ENCODE measurements at regions of chr4 and their contacts with region 1.

Region 1: GRCh38 chr4:74444891-74445642 is at the start of gene AREG:
- DNase-seq: peak; percentile 91 to 94 (median 92)
- H3K4me3 ChIP-seq: peak within 1 kb of the TSS; percentile 70 to 91 (median 80)
- H3K27ac ChIP-seq: peak within 1 kb of the TSS in 1 of 2 experiments; percentile 80
- H3K4me1 ChIP-seq: peaks cover 8 to 12% (median 9%) of the 10 kb centered on the region in 4 experiments
- H3K27me3 ChIP-seq: no peaks in the 10 kb centered on the region

Region 2: DNA sequence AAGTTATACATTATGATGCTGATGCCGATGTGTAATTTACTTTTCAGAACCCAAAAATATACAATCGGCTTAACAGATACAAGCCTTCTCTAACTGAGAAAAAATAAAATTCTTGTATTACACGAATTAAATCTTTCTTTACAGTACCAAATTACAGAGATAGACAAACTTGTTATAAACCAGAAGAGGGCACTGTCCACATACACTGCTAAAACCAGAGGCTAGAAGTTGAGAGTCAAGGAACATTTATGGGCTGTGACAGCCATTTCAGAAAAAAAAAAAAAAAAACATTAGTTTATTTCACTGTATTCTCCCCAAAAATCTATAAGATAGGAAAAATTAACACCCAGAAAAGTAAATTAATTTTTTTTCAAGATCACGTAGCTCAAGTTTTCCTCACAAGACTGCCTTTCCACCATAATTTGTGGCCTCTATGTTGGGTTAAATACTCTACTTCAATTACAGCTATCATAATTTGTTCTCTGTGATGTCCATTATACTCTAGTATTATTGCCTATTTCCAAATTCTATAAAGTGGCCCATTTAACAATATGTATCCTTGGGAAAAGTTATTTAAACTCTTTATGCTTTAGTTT is 68.1 kb before region 1 on chr4:
- CTCF ChIA-PET with region 1: interaction called, 35 read pairs
- POLR2A ChIA-PET with region 1: no interaction called
- DNase-seq: peak; percentile 65 to 82 (median 81)
- H3K4me3 ChIP-seq: no peak overlapping the region
- H3K27ac ChIP-seq: peak overlapping the region in 1 of 2 experiments; percentile 5
- H3K4me1 ChIP-seq: peaks cover 0 to 24% (median 6%) of the 10 kb centered on the region in 4 experiments
- H3K27me3 ChIP-seq: no peaks in the 10 kb centered on the region

Region 3: DNA sequence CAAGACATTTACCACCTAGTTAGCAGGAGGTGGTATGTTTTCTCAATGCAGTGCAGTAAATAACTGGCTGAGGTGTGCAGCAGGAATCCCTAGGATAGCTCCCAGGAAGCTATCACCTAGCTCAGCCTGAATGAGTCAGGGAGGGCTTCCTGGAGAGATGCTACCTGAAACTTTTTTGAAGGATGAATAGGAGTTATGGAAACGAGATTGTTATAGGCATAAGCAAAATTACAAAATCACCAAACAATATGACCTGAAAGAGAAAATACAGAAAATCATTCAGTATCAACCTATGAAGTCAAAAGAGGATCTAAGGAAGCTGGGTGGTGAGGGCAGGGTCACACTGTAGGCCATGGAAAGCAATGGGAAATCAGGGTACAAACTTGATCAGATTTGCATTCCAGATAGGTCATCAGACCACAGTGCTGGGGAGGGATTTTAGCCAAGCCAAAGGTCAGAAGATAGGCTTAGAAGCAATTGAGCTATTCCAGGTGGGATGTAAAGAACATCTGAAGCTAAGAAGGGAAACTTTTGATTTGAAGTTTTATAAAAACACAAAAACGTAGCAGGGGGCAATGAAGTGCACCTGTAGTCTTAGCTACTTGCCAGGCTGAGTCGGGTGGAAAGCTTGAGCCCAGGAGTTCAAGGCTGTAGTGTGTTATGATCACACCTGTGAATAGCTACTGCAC is 11.1 kb after region 1 on chr4:
- CTCF ChIA-PET with region 1: interaction called, 11 read pairs
- POLR2A ChIA-PET with region 1: interaction called, 3 read pairs
- DNase-seq: no peak
- H3K4me3 ChIP-seq: no peak overlapping the region
- H3K27ac ChIP-seq: no peak overlapping the region
- H3K4me1 ChIP-seq: peaks cover 0 to 3% (median 1%) of the 10 kb centered on the region in 4 experiments
- H3K27me3 ChIP-seq: no peaks in the 10 kb centered on the region

Region 4: DNA sequence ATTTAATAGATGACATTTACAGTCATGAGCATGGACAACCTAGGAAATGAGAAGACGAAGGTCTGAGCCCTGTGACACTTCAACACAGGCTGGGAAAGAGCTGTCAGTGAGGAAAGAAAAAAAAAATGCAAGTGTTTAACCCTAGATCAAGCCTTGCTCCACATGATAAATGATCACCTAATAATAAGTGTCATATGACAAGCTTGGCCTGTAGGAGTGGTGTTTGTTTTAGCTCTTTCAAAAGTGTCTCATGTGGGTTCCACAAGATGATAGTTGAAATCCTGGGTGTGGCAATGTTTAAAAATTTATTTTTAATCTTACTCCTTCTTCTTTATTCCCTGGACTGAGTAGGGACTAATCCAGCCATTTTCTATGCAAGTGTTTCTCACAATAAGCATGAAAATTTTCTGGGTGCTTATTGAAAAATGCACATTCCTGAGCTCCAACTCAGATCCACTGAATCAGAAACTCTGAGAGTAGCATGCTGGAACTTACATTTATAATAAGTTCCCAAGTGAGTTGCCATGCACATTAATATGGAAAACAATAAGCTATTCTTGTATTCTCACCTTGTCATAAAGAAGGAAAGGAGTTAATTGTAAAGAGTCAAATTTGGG is 138.1 kb after region 1 on chr4:
- CTCF ChIA-PET with region 1: no interaction called
- POLR2A ChIA-PET with region 1: no interaction called
- DNase-seq: no peak
- H3K4me3 ChIP-seq: no peak overlapping the region
- H3K27ac ChIP-seq: no peak overlapping the region
- H3K4me1 ChIP-seq: no peaks in the 10 kb centered on the region
- H3K27me3 ChIP-seq: no peaks in the 10 kb centered on the region

Measured in common myeloid progenitor, CD34-positive (primary cell).